ENCODE measurements at regions of chr22 and their contacts with region 1.

Region 1: GRCh38 chr22:37686002-37686982 is at the start of gene NOL12:
- DNase-seq: peak; percentile 87
- ATAC-seq: peak; percentile 96
- total RNA-seq, gene NOL12: 14.3 TPM

Region 2: GRCh38 chr22:37609240-37610152 is 76.8 kb before region 1 on chr22:
- intact Hi-C with region 1: loop called (anchors 5 kb)
- DNase-seq: no peak
- ATAC-seq: no peak

Region 3: DNA sequence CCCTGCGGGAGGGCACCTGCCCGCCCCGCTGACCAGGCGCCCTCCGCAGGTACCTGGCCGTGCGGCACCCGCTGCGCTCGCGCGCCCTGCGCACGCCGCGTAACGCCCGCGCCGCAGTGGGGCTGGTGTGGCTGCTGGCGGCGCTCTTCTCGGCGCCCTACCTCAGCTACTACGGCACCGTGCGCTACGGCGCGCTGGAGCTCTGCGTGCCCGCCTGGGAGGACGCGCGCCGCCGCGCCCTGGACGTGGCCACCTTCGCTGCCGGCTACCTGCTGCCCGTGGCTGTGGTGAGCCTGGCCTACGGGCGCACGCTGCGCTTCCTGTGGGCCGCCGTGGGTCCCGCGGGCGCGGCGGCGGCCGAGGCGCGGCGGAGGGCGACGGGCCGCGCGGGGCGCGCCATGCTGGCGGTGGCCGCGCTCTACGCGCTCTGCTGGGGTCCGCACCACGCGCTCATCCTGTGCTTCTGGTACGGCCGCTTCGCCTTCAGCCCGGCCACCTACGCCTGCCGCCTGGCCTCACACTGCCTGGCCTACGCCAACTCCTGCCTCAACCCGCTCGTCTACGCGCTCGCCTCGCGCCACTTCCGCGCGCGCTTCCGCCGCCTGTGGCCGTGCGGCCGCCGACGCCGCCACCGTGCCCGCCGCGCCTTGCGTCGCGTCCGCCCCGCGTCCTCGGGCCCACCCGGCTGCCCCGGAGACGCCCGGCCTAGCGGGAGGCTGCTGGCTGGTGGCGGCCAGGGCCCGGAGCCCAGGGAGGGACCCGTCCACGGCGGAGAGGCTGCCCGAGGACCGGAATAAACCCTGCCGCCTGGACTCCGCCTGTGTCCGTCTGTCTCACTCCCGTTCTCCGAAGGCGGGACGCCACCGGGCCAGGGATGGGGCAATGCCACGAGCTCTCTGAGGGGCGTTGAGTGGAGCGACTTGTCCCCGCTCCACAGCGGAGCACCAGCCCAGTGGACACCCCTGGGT is 138.7 kb after region 1 on chr22:
- intact Hi-C with region 1: no loop called
- DNase-seq: no peak
- ATAC-seq: no peak

Measured in Right ventricle myocardium superior (tissue), 1 donor.